Activated CD4-positive, alpha-beta T cell treated with anti-CD3 and anti-CD28 coated beads for 36 hours (primary cell): ENCODE measurements at regions of chr1 and their contacts with region 1.

Region 1: GRCh38 chr1:203320591-203321272 is 15.4 kb downstream of the BTG2 start:
- DNase-seq: peak; percentile 71
- ATAC-seq: peak; percentile 65
- H3K4me3 Mint-ChIP-seq: peak overlapping the region; percentile 29
- H3K27ac Mint-ChIP-seq: peak overlapping the region; percentile 80
- H3K4me1 Mint-ChIP-seq: peaks cover 77% of the 10 kb centered on the region
- H3K27me3 Mint-ChIP-seq: no peaks in the 10 kb centered on the region

Region 2: GRCh38 chr1:203084588-203085502 is 235.9 kb before region 1 on chr1:
- CTCF ChIA-PET with region 1: no interaction called
- POLR2A ChIA-PET with region 1: no interaction called
- intact Hi-C with region 1: no loop called
- DNase-seq: peak; percentile 71
- ATAC-seq: peak; percentile 68
- H3K4me3 Mint-ChIP-seq: no peak overlapping the region
- H3K27ac Mint-ChIP-seq: no peak overlapping the region
- H3K4me1 Mint-ChIP-seq: no peaks in the 10 kb centered on the region
- H3K27me3 Mint-ChIP-seq: peaks cover 2% of the 10 kb centered on the region

Region 3: GRCh38 chr1:203229471-203230135 is 91.1 kb before region 1 on chr1 and contains the start of gene CHIT1:
- CTCF ChIA-PET with region 1: no interaction called
- POLR2A ChIA-PET with region 1: no interaction called
- intact Hi-C with region 1: no loop called
- DNase-seq: no peak
- ATAC-seq: no peak
- H3K4me3 Mint-ChIP-seq: no peak within 1 kb of the TSS
- H3K27ac Mint-ChIP-seq: no peak within 1 kb of the TSS
- H3K4me1 Mint-ChIP-seq: no peaks in the 10 kb centered on the region
- H3K27me3 Mint-ChIP-seq: peaks cover 19% of the 10 kb centered on the region
- total RNA-seq, gene CHIT1: 0.63 to 0.80 TPM

Region 4: DNA sequence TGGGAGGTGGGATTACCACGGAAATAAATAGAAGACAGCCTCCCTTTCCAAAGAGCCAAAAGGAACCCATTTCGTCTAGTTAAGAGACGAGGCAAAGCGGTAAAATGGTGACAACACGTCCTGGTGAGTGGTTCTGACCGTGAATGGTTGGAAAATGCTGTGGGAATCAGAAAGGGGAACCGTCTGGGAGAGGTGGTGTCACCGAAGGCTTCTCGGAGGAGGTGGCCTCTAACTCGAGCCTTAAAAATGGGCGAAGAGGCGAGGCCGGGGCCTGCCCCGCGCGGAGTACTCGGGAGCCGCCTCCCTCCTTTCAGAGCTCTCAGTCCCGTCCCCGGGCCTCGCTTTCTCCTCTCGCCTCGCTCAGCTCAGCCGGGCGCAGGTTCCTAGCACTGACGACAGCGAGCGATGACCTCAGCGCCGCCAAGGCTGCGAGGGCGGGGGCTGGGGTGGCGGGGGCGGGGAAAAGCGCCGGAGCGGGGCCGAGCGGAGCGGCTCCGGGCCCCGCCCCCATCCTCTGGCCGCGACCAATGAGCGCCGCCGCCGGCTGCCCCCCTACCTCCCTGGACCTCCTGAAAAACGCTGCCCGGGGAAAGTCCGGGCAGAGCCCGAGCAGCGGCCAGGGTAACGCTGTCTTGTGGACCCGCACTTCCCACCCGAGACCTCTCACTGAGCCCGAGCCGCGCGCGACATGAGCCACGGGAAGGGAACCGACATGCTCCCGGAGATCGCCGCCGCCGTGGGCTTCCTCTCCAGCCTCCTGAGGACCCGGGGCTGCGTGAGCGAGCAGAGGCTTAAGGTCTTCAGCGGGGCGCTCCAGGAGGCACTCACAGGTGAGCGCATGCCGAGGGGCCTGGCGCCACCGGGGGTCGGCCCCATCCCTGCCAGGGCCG is 15.6 kb before region 1 on chr1 and contains the start of gene BTG2:
- CTCF ChIA-PET with region 1: interaction called, 143 read pairs
- POLR2A ChIA-PET with region 1: interaction called, 97 read pairs
- intact Hi-C with region 1: loop called in 1 of 2 experiments (anchors 1 kb)
- DNase-seq: peak; percentile 96
- ATAC-seq: peak; percentile 88
- H3K4me3 Mint-ChIP-seq: peak within 1 kb of the TSS; percentile 98
- H3K27ac Mint-ChIP-seq: peak within 1 kb of the TSS; percentile 97
- H3K4me1 Mint-ChIP-seq: peaks cover 54% of the 10 kb centered on the region
- H3K27me3 Mint-ChIP-seq: no peaks in the 10 kb centered on the region
- total RNA-seq, gene BTG2: 114 to 142 TPM

Region 5: DNA sequence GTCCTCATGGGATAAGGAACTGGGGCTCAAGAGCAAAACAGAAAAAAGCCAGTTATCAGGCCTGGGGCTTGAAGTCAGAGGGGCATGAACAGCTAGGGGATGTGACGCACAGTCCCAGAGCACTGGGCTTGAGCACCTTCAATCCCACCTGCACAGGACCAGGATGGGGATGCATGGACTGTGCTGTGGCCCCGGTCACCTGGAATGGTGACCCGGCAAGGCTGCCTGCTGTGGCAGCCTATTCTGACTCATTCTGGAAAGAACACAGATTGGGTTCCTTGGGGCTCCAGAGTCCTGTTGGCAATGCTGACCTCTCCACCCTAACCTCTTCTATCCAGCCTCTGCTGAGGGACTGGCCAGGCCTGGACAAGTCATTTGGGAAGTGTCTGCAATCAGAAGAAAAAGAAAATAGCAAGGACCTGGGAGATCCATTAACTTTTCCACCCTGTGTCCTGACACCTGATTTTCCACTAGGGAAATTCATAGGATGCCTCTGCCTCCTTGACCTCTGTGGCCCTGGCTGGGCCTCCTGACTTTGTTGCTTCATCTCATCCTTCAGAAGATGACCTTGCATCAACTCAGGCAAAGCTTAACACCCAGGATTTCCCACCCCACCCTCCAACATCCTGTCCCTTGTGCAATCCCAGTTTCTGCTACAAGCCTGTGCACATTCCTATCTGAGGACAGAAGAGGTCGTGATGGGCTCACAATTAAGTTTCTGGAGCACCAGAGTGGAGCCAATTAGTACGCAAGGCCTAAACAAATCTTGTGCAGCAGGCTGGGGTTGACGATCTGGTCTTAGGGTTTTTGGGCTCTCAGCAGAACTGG is 48.1 kb after region 1 on chr1:
- CTCF ChIA-PET with region 1: no interaction called
- POLR2A ChIA-PET with region 1: no interaction called
- intact Hi-C with region 1: no loop called
- DNase-seq: no peak
- ATAC-seq: no peak
- H3K4me3 Mint-ChIP-seq: no peak overlapping the region
- H3K27ac Mint-ChIP-seq: no peak overlapping the region
- H3K4me1 Mint-ChIP-seq: no peaks in the 10 kb centered on the region
- H3K27me3 Mint-ChIP-seq: no peaks in the 10 kb centered on the region